ENCODE measurements at regions of chr2 and their contacts with region 1.

Region 1: DNA sequence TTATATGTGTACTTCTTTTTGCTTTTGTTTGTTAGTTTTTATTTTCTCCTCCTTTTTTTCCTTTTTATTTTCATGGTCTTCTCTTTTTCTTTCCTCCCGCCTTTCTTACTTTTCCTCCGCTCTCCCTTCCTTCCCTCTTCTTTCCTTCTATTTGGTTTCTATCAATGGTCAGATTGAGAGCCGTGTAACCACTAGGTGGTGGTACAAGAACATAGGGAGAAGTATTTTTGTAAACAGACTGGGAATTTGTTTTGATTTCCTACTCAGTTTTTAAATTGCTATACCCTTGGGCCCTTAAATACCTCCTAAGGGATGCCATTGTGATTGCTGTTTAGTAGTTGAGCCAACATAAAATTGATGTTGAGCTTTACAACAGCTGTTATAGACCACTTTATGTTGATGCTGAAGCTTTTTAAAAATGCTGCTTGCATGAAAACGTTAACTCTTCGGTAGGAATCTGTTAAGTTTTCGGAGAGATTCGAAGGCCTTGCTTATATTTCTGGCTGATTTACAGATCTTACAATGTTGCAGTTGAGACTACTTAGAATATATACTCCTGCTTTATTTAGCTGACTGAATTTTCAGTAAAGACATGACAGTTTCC is 124.2 kb downstream of the UBE2E3 start:
- DNase-seq: peak; percentile 41
- ATAC-seq: peak; percentile 12
- H3K4me3 Mint-ChIP-seq: no peak overlapping the region
- H3K27ac Mint-ChIP-seq: peak overlapping the region; percentile 1
- H3K4me1 Mint-ChIP-seq: peaks cover 47% of the 10 kb centered on the region
- H3K27me3 Mint-ChIP-seq: no peaks in the 10 kb centered on the region

Region 2: GRCh38 chr2:181085734-181086133 is 18.9 kb before region 1 on chr2:
- CTCF ChIA-PET with region 1: interaction called, 11 read pairs
- POLR2A ChIA-PET with region 1: no interaction called
- DNase-seq: no peak
- ATAC-seq: no peak
- H3K4me3 Mint-ChIP-seq: no peak overlapping the region
- H3K27ac Mint-ChIP-seq: no peak overlapping the region
- H3K4me1 Mint-ChIP-seq: no peaks in the 10 kb centered on the region
- H3K27me3 Mint-ChIP-seq: peaks cover 3% of the 10 kb centered on the region

Region 3: DNA sequence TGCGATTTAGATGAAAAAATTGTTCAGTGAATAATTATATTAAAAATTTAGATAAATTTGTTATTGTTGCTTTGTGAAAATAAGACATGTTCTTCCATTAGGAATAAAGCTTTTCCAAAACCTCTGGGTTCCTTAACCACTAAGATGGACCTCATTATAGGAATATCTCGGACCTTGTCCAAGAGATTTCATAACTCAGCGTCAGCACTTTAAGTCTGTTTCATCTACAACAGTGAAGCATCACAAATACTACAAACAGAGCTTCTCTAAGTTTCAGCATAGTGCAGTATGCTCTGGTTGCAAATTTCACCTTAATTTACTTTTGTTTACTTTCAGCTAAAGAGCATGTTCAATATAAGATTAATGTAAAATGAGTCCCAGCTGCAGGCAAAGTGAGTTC is 26.1 kb after region 1 on chr2:
- CTCF ChIA-PET with region 1: interaction called, 19 read pairs
- POLR2A ChIA-PET with region 1: interaction called, 4 read pairs
- DNase-seq: no peak
- ATAC-seq: no peak
- H3K4me3 Mint-ChIP-seq: peak overlapping the region; percentile 72
- H3K27ac Mint-ChIP-seq: peak overlapping the region; percentile 84
- H3K4me1 Mint-ChIP-seq: peaks cover 55% of the 10 kb centered on the region
- H3K27me3 Mint-ChIP-seq: no peaks in the 10 kb centered on the region

Region 4: DNA sequence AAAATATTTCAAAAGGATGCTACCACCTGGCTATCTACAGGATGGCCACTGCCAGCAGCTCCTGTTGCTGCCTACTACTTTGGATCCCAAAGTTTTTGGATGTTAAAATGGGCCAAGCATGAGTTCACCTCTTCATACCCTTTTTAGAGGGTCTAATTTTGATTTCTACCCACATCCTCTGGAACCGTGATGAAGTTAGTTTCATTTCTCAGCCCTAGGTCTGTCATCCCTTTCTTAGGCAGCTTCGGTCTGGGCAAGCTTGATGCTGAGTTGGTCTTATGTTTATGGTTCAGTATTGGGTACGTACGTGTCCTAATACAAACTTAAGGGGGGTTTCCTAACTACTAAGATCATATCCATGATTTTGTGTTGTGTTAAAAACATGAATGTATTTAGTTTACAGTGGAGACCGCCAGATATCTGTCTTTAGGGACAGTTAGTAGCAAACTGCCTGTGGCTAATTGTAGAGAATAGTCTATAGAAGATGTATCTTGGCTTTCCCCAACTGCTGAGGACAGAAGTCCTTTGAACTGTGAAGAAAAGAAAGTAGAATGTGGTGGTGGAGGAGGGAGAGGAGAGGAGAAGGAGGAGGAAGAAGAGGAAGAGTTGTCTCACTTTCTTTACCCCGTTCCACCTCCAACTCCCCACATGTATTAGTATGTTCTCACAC is 60.7 kb after region 1 on chr2:
- CTCF ChIA-PET with region 1: interaction called, 18 read pairs
- POLR2A ChIA-PET with region 1: interaction called, 3 read pairs
- DNase-seq: peak; percentile 55
- ATAC-seq: peak; percentile 86
- H3K4me3 Mint-ChIP-seq: peak overlapping the region; percentile 27
- H3K27ac Mint-ChIP-seq: peak overlapping the region; percentile 93
- H3K4me1 Mint-ChIP-seq: peaks cover 47% of the 10 kb centered on the region
- H3K27me3 Mint-ChIP-seq: no peaks in the 10 kb centered on the region

Region 5: GRCh38 chr2:181305301-181306123 is 200.9 kb after region 1 on chr2:
- CTCF ChIA-PET with region 1: interaction called, 14 read pairs
- POLR2A ChIA-PET with region 1: interaction called, 5 read pairs
- DNase-seq: peak; percentile 80
- ATAC-seq: peak; percentile 78
- H3K4me3 Mint-ChIP-seq: peak overlapping the region; percentile 76
- H3K27ac Mint-ChIP-seq: peak overlapping the region; percentile 93
- H3K4me1 Mint-ChIP-seq: peaks cover 67% of the 10 kb centered on the region
- H3K27me3 Mint-ChIP-seq: no peaks in the 10 kb centered on the region

Region 6: GRCh38 chr2:181457121-181457740 is 352.6 kb after region 1 on chr2 and contains the start of gene ITGA4:
- CTCF ChIA-PET with region 1: interaction called, 69 read pairs
- POLR2A ChIA-PET with region 1: interaction called, 39 read pairs
- DNase-seq: peak; percentile 91
- ATAC-seq: peak; percentile 82
- H3K4me3 Mint-ChIP-seq: peak within 1 kb of the TSS; percentile 89
- H3K27ac Mint-ChIP-seq: peak within 1 kb of the TSS; percentile 89
- H3K4me1 Mint-ChIP-seq: peaks cover 34% of the 10 kb centered on the region
- H3K27me3 Mint-ChIP-seq: no peaks in the 10 kb centered on the region
- total RNA-seq, gene ITGA4: 144 to 152 TPM

Region 7: DNA sequence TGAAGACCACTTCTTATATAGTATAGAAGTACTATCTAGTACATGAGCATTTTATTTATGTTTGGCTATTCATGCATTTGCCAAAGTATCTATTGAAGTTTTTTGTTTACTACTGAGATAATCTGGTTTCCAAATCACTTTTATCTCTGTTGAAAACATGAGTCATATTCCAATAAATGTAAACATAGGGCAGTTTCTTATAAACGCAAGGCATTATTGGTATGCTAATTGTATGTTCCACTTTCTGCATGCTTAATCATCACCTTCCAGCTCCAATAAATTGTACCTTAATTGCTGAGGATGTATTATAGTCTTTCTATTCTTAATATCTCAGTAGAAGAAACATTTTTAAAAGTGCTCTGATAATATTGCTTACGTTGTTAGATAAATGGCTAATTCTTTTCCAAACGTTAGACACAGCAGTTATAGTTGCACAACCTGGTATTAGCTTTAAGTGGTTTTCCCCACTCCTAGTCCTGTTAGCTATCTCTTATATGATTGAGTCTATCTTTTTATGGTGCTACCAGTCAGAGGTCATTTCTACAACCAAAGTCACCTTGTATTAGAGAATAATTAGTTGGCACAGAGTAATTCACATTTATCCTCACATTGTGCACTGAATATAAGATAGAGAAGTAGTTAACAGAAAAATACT is 369.7 kb after region 1 on chr2:
- CTCF ChIA-PET with region 1: interaction called, 13 read pairs
- POLR2A ChIA-PET with region 1: no interaction called
- DNase-seq: no peak
- ATAC-seq: no peak
- H3K4me3 Mint-ChIP-seq: no peak overlapping the region
- H3K27ac Mint-ChIP-seq: no peak overlapping the region
- H3K4me1 Mint-ChIP-seq: peaks cover 51% of the 10 kb centered on the region
- H3K27me3 Mint-ChIP-seq: no peaks in the 10 kb centered on the region

Measured in activated CD8-positive, alpha-beta T cell treated with anti-CD3 and anti-CD28 coated beads, Interleukin-2, amount 10 ng/mL, durations not matched to agents 7 days and 5 days (primary cell).